HCT116 (cell line): ENCODE measurements at regions of chr21 and their contacts with region 1.

Region 1: GRCh38 chr21:38712071-38712470 is 93.7 kb upstream of the ETS2 start:
- DNase-seq: peak; percentile 31
- ATAC-seq: peak; percentile 92
- H3K4me3 ChIP-seq: no peak overlapping the region
- H3K27ac ChIP-seq: no peak overlapping the region
- H3K4me1 ChIP-seq: no peaks in the 10 kb centered on the region; a peak in 1 of 4 replicates
- H3K27me3 ChIP-seq: no peaks in the 10 kb centered on the region
- CTCF ChIP-seq: peak; percentile 56 to 66 (median 65); a peak in 5 of 6 replicates
- POLR2A ChIP-seq: no peak
- RAD21 ChIP-seq: peak; percentile 60

Region 2: DNA sequence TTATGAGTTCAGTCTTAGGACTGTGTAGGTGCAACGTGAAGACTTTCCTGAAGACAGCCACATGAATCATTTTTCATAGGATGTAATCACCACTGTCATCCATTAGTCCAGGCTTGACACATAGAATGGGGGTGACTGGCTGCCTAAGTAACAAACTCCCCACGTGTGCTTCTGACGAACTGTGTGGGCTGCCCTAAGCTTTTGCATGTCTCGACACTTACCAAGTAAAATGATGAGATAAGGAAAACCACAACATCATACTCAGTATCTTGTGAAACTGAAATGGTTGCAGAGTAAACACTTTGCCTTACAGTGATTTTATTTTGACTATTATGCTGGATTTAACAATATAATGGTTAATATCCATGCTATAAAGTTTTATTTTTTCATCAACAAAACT is 233.3 kb before region 1 on chr21:
- CTCF ChIA-PET with region 1: no interaction called
- POLR2A ChIA-PET with region 1: no interaction called
- RAD21 ChIA-PET with region 1: no interaction called
- intact Hi-C with region 1: no loop called
- DNase-seq: no peak
- ATAC-seq: no peak
- H3K4me3 ChIP-seq: no peak overlapping the region
- H3K27ac ChIP-seq: no peak overlapping the region
- H3K4me1 ChIP-seq: no peaks in the 10 kb centered on the region
- H3K27me3 ChIP-seq: peaks cover 16% of the 10 kb centered on the region
- CTCF ChIP-seq: no peak
- POLR2A ChIP-seq: no peak
- RAD21 ChIP-seq: no peak

Region 3: GRCh38 chr21:38505654-38506515 is 206.2 kb before region 1 on chr21:
- CTCF ChIA-PET with region 1: interaction called, 7 read pairs
- POLR2A ChIA-PET with region 1: no interaction called
- RAD21 ChIA-PET with region 1: no interaction called
- intact Hi-C with region 1: loop called (anchors 2 kb)
- DNase-seq: peak; percentile 42
- ATAC-seq: peak; percentile 86
- H3K4me3 ChIP-seq: no peak overlapping the region
- H3K27ac ChIP-seq: no peak overlapping the region
- H3K4me1 ChIP-seq: no peaks in the 10 kb centered on the region
- H3K27me3 ChIP-seq: peaks cover 8% of the 10 kb centered on the region; the same call in 1 of the 2 replicates
- CTCF ChIP-seq: peak; percentile 52 to 69 (median 67); a peak in 5 of 6 replicates
- POLR2A ChIP-seq: no peak
- RAD21 ChIP-seq: peak; percentile 64

Region 4: DNA sequence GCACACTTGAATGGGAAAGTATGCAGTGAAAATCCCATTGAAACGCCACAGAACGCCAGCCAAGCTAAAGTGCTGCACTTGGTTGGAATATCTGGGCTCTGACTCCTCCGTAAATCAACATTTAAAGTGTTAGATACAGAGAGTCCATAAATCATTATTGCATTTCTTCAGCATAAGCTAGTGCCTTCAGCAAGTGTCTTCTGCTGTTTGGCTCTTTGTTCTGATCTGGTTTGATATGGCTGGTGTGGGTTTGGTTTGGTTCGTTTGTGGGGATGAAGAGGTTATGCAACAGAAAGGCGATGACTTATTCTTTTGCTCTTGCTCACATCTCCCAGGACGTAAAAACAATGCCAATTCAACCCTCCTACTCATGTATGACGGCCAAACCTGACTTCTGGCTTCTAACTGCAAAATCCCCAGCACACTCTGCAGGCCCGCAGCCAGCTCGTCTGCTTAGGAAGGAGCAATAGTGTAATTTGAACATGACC is 92.0 kb before region 1 on chr21:
- CTCF ChIA-PET with region 1: interaction called, 5 read pairs
- POLR2A ChIA-PET with region 1: no interaction called
- RAD21 ChIA-PET with region 1: no interaction called
- intact Hi-C with region 1: loop called (anchors 5 kb)
- DNase-seq: no peak
- ATAC-seq: no peak
- H3K4me3 ChIP-seq: no peak overlapping the region
- H3K27ac ChIP-seq: no peak overlapping the region
- H3K4me1 ChIP-seq: no peaks in the 10 kb centered on the region
- H3K27me3 ChIP-seq: no peaks in the 10 kb centered on the region
- CTCF ChIP-seq: no peak
- POLR2A ChIP-seq: no peak
- RAD21 ChIP-seq: no peak

Region 5: GRCh38 chr21:38645282-38645681 is 66.8 kb before region 1 on chr21:
- CTCF ChIA-PET with region 1: no interaction called
- POLR2A ChIA-PET with region 1: no interaction called
- RAD21 ChIA-PET with region 1: no interaction called
- intact Hi-C with region 1: no loop called
- DNase-seq: no peak
- ATAC-seq: no peak
- H3K4me3 ChIP-seq: no peak overlapping the region
- H3K27ac ChIP-seq: no peak overlapping the region
- H3K4me1 ChIP-seq: no peaks in the 10 kb centered on the region
- H3K27me3 ChIP-seq: peaks cover 35% of the 10 kb centered on the region
- CTCF ChIP-seq: no peak
- POLR2A ChIP-seq: no peak
- RAD21 ChIP-seq: no peak

Region 6: DNA sequence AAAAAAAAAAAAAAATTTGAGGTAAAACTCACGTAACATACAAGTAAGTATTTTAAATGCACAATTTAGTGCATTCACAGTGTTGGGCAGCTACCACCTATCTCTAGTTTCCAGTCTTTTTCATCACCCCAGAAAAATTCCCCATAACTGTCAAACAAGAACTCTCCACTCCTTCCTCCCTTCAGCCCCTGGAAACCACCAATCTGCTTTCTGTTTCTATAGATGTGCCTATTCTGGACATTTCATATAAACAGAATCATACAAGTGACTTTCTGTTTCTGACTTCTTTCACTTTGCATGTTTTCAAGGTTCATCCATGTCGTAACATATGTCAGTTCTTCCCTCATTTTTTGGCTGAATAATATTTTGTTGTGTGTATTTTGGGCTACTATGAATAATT is 68.8 kb after region 1 on chr21:
- CTCF ChIA-PET with region 1: no interaction called
- POLR2A ChIA-PET with region 1: no interaction called
- RAD21 ChIA-PET with region 1: no interaction called
- intact Hi-C with region 1: no loop called
- DNase-seq: no peak
- ATAC-seq: no peak
- H3K4me3 ChIP-seq: no peak overlapping the region
- H3K27ac ChIP-seq: no peak overlapping the region
- H3K4me1 ChIP-seq: peaks cover 7 to 23% of the 10 kb centered on the region in 2 experiments
- H3K27me3 ChIP-seq: no peaks in the 10 kb centered on the region
- CTCF ChIP-seq: no peak
- POLR2A ChIP-seq: no peak
- RAD21 ChIP-seq: no peak

Region 7: GRCh38 chr21:38950435-38951094 is 238.5 kb after region 1 on chr21:
- CTCF ChIA-PET with region 1: no interaction called
- POLR2A ChIA-PET with region 1: no interaction called
- RAD21 ChIA-PET with region 1: no interaction called
- intact Hi-C with region 1: no loop called
- DNase-seq: no peak
- ATAC-seq: no peak
- H3K4me3 ChIP-seq: no peak overlapping the region
- H3K27ac ChIP-seq: no peak overlapping the region
- H3K4me1 ChIP-seq: 0 out of 4 replicates have a peak, but pooled peaks cover 0 to 4% of the 10 kb centered on the region in 2 experiments
- H3K27me3 ChIP-seq: no peaks in the 10 kb centered on the region
- CTCF ChIP-seq: no peak
- POLR2A ChIP-seq: no peak
- RAD21 ChIP-seq: no peak